ENCODE measurements at regions of chr11 and their contacts with region 1.

Region 1: GRCh38 chr11:62556108-62556871 is 9.7 kb upstream of the AHNAK start:
- DNase-seq: peak; percentile 56 to 79 (median 69)
- ATAC-seq: peak; percentile 54
- H3K4me3 ChIP-seq: no peak overlapping the region
- H3K27ac ChIP-seq: peak overlapping the region; percentile 73
- H3K4me1 ChIP-seq: peaks cover 65 to 72% of the 10 kb centered on the region in 2 experiments
- H3K27me3 ChIP-seq: no peaks in the 10 kb centered on the region
- CTCF ChIP-seq: no peak
- EP300 ChIP-seq: no peak; the same call in 1 of the 2 replicates
- POLR2A ChIP-seq: no peak
- RAD21 ChIP-seq: no peak; a peak in 1 of 4 replicates

Region 2: GRCh38 chr11:61602775-61603569 is 953.3 kb before region 1 on chr11:
- CTCF ChIA-PET with region 1: no interaction called
- POLR2A ChIA-PET with region 1: no interaction called
- in situ Hi-C with region 1: no loop called
- intact Hi-C with region 1: no loop called
- DNase-seq: peak; percentile 68 to 73 (median 72)
- ATAC-seq: peak; percentile 77
- H3K4me3 ChIP-seq: no peak overlapping the region
- H3K27ac ChIP-seq: no peak overlapping the region
- H3K4me1 ChIP-seq: peaks cover 0 to 9% of the 10 kb centered on the region in 2 experiments; a peak in 3 of 5 replicates
- H3K27me3 ChIP-seq: peaks cover 12 to 76% of the 10 kb centered on the region in 2 experiments
- CTCF ChIP-seq: no peak
- EP300 ChIP-seq: peak; percentile 11; the same call in 1 of the 2 replicates
- POLR2A ChIP-seq: no peak
- RAD21 ChIP-seq: no peak

Region 3: DNA sequence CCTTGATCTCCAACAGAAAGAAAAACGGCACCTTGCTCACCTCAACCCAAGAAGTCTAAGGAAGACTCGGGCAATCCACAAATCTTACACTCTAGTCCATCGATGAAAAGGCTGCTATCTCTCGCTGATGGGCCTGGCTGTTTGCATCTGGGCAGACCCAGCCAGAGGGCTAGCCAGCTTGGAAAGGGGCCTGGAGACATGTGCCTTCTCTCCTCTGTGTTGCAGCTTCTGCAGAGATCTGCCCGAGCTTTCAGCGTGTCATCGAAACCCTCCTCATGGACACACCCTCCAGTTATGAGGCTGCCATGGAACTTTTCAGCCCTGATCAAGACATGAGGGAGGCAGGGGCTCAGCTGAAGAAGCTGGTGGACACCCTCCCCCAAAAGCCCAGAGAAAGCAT is 134.3 kb before region 1 on chr11:
- CTCF ChIA-PET with region 1: interaction called, 15 read pairs
- POLR2A ChIA-PET with region 1: interaction called, 7 read pairs
- in situ Hi-C with region 1: loop called (anchors 5 kb)
- intact Hi-C with region 1: no loop called
- DNase-seq: no peak
- ATAC-seq: no peak
- H3K4me3 ChIP-seq: no peak overlapping the region
- H3K27ac ChIP-seq: no peak overlapping the region
- H3K4me1 ChIP-seq: peaks cover 33 to 35% of the 10 kb centered on the region in 2 experiments
- H3K27me3 ChIP-seq: no peaks in the 10 kb centered on the region
- CTCF ChIP-seq: no peak
- EP300 ChIP-seq: no peak
- POLR2A ChIP-seq: no peak
- RAD21 ChIP-seq: no peak

Region 4: GRCh38 chr11:62427630-62428233 is 128.6 kb before region 1 on chr11:
- CTCF ChIA-PET with region 1: interaction called, 15 read pairs
- POLR2A ChIA-PET with region 1: interaction called, 7 read pairs
- in situ Hi-C with region 1: loop called (anchors 5 kb)
- intact Hi-C with region 1: no loop called
- DNase-seq: no peak
- ATAC-seq: no peak
- H3K4me3 ChIP-seq: no peak overlapping the region
- H3K27ac ChIP-seq: peak overlapping the region; percentile 37; the same call in 2 of the 3 replicates
- H3K4me1 ChIP-seq: peaks cover 16 to 30% of the 10 kb centered on the region in 2 experiments
- H3K27me3 ChIP-seq: no peaks in the 10 kb centered on the region
- CTCF ChIP-seq: no peak
- EP300 ChIP-seq: no peak; the same call in 1 of the 2 replicates
- POLR2A ChIP-seq: no peak
- RAD21 ChIP-seq: peak in 1 of 2 experiments; percentile 16; a peak in 1 of 4 replicates

Region 5: GRCh38 chr11:62573592-62574362 is 17.5 kb after region 1 on chr11 and contains the start of gene EEF1G:
- CTCF ChIA-PET with region 1: no interaction called
- POLR2A ChIA-PET with region 1: interaction called, 15 read pairs
- in situ Hi-C with region 1: no loop called
- intact Hi-C with region 1: no loop called
- DNase-seq: peak; percentile 97 to 99 (median 98)
- ATAC-seq: peak; percentile 97
- H3K4me3 ChIP-seq: peak within 1 kb of the TSS; percentile 96
- H3K27ac ChIP-seq: peak within 1 kb of the TSS; percentile 88
- H3K4me1 ChIP-seq: peaks cover 22 to 40% of the 10 kb centered on the region in 2 experiments; a peak in 4 of 5 replicates
- H3K27me3 ChIP-seq: no peaks in the 10 kb centered on the region
- CTCF ChIP-seq: no peak
- EP300 ChIP-seq: no peak
- POLR2A ChIP-seq: peak; percentile 97
- RAD21 ChIP-seq: no peak
- polyA plus RNA-seq, gene EEF1G: 985 to 1,460 TPM

Region 6: GRCh38 chr11:62632492-62632891 is 76.2 kb after region 1 on chr11:
- CTCF ChIA-PET with region 1: no interaction called
- POLR2A ChIA-PET with region 1: no interaction called
- in situ Hi-C with region 1: no loop called
- intact Hi-C with region 1: no loop called
- DNase-seq: no peak
- ATAC-seq: no peak
- H3K4me3 ChIP-seq: no peak overlapping the region
- H3K27ac ChIP-seq: no peak overlapping the region
- H3K4me1 ChIP-seq: no peaks in the 10 kb centered on the region
- H3K27me3 ChIP-seq: no peaks in the 10 kb centered on the region
- CTCF ChIP-seq: no peak
- EP300 ChIP-seq: no peak
- POLR2A ChIP-seq: no peak
- RAD21 ChIP-seq: no peak